ENCODE measurements at regions of chr17 and their contacts with region 1.

Region 1: DNA sequence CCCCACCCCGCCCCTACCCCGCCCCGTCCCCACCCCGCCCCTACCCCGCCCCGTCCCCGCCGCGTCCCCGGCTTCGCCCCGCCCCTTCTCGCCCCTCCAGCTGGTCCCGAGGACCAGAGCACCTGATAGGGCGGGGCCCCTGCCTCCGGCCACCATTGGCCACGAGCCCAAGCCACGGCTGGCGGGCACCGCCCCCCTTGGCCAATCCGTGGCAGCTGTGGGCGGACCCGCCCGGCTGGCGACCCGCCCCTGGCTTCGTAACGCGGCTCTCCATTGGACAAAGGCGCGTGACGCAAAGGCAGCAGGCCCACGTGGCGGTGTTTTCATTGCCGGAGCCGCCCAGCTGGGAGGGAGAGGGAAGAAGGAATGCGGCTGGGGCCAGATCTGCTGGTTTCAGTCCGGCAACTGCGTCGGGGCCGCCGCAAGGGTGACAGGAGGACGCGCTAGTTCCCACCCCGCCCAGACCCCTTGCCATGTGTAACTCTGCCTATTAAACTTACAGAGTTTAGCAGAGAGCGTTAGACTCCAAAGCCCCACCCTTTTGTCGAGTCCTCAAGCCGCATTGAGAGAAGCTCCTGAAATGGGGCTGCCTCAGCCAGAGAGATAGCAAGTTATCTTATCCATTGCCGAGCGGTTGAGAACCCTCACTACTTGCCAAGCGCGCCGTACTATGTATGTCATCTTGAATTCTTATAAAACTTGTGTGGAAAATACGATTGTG is 403 bp upstream of the WIPI1 start:
- DNase-seq: peak; percentile 99
- ATAC-seq: peak; percentile 57 to 63
- H3K4me3 ChIP-seq: peak overlapping the region; percentile 57 to 97 (median 62)
- H3K27ac ChIP-seq: peak overlapping the region; percentile 91 to 100 (median 94)
- H3K4me1 ChIP-seq: peaks cover 71 to 78% of the 10 kb centered on the region in 2 donors
- H3K27me3 ChIP-seq: no peaks in the 10 kb centered on the region
- CTCF ChIP-seq: peak in 2 of 5 experiments; percentile 16 to 17
- POLR2A ChIP-seq: peak; percentile 96 to 99

Region 2: DNA sequence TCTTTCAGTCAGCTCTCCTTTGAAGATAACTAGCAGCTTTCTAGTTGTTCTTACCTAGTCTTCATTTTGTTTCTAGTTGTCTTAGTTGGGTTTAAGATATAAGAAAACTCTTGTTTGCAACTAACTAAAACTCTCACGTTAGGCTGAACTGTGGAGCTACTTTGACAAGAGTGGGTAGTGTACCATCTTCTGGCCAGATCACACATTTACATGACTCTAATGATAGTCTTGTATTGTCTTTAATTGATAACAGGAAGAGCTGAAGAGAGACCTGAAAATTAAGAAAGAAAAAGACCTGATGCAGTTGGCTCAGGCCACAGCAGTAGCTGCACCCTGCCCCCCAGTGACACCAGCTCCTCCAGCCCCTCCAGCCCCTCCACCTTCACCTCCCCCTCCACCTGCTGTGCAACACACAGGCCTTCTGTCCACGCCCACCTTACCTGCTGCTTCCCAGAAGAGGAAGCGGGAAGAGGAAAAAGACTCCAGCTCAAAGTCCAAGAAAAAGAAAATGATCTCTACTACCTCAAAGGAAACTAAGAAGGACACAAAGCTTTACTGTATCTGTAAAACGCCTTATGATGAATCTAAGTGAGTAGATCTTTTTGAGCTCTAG is 498.3 kb before region 1 on chr17:
- in situ Hi-C with region 1: no loop called
- intact Hi-C with region 1: loop called (anchors 5 kb)
- DNase-seq: no peak
- ATAC-seq: no peak
- H3K4me3 ChIP-seq: no peak overlapping the region
- H3K27ac ChIP-seq: no peak overlapping the region
- H3K4me1 ChIP-seq: no peaks in the 10 kb centered on the region
- H3K27me3 ChIP-seq: no peaks in the 10 kb centered on the region
- CTCF ChIP-seq: no peak
- POLR2A ChIP-seq: no peak

Region 3: DNA sequence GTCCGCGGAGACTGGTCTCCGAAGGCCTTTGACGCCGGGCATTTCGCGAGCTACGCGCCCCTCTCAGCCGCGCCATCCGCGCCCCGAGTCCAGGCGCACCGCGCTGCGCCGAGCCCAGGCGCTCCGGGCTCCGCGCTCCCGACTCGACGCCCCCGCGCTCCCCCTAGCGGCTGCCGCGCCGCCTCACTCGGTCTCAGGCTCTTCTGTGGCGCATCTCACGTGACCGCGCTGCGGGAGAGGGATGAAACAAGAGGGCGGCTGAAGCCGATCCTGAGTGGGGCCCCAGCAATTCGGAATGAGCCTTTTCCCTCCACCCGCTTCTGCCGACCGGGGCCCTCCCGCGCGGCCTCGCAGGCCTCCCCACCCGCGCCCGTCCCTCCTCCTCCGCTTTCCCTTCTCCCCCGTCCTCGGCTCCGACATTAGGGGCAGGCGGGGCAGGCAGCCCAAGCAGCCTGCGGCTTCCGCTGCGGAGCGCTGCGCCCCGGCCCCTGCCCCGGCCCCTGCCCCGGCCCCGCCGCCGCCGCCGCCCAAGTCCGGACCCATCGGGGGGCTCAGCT is 252.4 kb before region 1 on chr17:
- in situ Hi-C with region 1: no loop called
- intact Hi-C with region 1: loop called (anchors 10 kb)
- DNase-seq: peak; percentile 87
- ATAC-seq: peak; percentile 88 to 90
- H3K4me3 ChIP-seq: peak overlapping the region; percentile 74 to 87 (median 76)
- H3K27ac ChIP-seq: peak overlapping the region; percentile 66 to 91 (median 78)
- H3K4me1 ChIP-seq: peaks cover 10 to 14% of the 10 kb centered on the region in 2 donors
- H3K27me3 ChIP-seq: peaks cover 0 to 2% (median 0%) of the 10 kb centered on the region in 3 donors
- CTCF ChIP-seq: peak; percentile 75 to 94 (median 90)
- POLR2A ChIP-seq: peak; percentile 61 to 68

Region 4: GRCh38 chr17:68324114-68324513 is 133.6 kb before region 1 on chr17:
- in situ Hi-C with region 1: no loop called
- intact Hi-C with region 1: loop called (anchors 1 kb)
- DNase-seq: peak; percentile 91 to 97
- ATAC-seq: peak; percentile 74 to 79
- H3K4me3 ChIP-seq: no peak overlapping the region
- H3K27ac ChIP-seq: peak overlapping the region; percentile 94 to 99 (median 95)
- H3K4me1 ChIP-seq: peaks cover 40 to 42% of the 10 kb centered on the region in 2 donors
- H3K27me3 ChIP-seq: no peaks in the 10 kb centered on the region
- CTCF ChIP-seq: no peak
- POLR2A ChIP-seq: peak; percentile 30 to 53

Region 5: GRCh38 chr17:68435876-68436842 is 21.5 kb before region 1 on chr17:
- in situ Hi-C with region 1: no loop called
- intact Hi-C with region 1: loop called (anchors 2 kb)
- DNase-seq: peak; percentile 69 to 88
- ATAC-seq: peak; percentile 72 to 83
- H3K4me3 ChIP-seq: no peak overlapping the region
- H3K27ac ChIP-seq: peak overlapping the region; percentile 88 to 100 (median 95)
- H3K4me1 ChIP-seq: peaks cover 37% of the 10 kb centered on the region in 2 donors
- H3K27me3 ChIP-seq: no peaks in the 10 kb centered on the region
- CTCF ChIP-seq: peak; percentile 89 to 96 (median 94)
- POLR2A ChIP-seq: no peak